WTC11 (cell line): ENCODE measurements at regions of chr7 and their contacts with region 1.

Region 1: GRCh38 chr7:71925663-71926062 is 486.5 kb downstream of the CALN1 start:
- DNase-seq: peak; percentile 51
- ATAC-seq: peak; percentile 100
- H3K4me3 Mint-ChIP-seq: no peak overlapping the region
- H3K27ac Mint-ChIP-seq: no peak overlapping the region
- H3K4me1 Mint-ChIP-seq: no peaks in the 10 kb centered on the region
- H3K27me3 Mint-ChIP-seq: no peaks in the 10 kb centered on the region
- CTCF ChIP-seq: peak; percentile 55

Region 2: DNA sequence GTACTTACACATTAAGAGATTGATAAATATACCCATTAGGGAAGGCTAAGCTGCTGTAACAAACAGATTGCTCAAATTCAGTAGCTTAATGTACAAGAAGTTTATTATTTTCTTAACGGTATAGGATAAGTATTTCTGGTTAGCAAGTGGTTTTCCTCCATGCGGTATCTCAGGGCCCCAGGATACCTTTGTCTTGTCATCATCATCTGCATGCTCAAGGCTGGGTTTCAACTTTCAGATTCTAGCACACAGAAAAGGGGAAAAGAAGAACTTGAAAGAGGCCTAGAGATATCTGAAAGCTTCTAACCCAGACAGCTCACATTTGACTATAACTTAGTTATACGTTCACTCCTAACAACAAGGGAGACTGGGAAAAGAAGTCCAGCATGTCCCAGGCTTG is 805.6 kb before region 1 on chr7:
- CTCF ChIA-PET with region 1: no interaction called
- POLR2A ChIA-PET with region 1: no interaction called
- DNase-seq: no peak
- ATAC-seq: no peak
- H3K4me3 Mint-ChIP-seq: no peak overlapping the region
- H3K27ac Mint-ChIP-seq: no peak overlapping the region
- H3K4me1 Mint-ChIP-seq: peaks cover 5% of the 10 kb centered on the region; the same call in 1 of the 2 replicates
- H3K27me3 Mint-ChIP-seq: peaks cover 7% of the 10 kb centered on the region; the same call in 1 of the 2 replicates
- CTCF ChIP-seq: no peak

Region 3: DNA sequence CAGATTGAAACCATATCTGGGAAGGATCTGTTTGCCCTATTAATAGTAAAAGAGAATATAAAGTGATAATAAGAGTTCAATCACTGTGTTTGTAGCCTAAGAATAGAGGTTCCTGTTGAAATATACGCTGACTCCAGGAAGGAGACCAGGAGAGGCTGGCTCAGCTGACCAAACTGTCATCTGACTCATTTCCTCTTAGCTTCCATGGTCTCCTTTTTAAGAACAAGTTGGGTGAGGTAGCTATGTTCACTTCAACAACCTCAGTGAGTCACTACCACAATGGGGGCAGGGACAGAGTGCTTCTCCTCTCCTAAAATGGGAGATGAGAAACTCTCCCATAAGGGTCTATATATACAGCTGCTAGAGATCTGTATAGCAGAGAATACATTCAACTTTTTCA is 56.9 kb before region 1 on chr7:
- CTCF ChIA-PET with region 1: no interaction called
- POLR2A ChIA-PET with region 1: no interaction called
- DNase-seq: no peak
- ATAC-seq: no peak
- H3K4me3 Mint-ChIP-seq: no peak overlapping the region
- H3K27ac Mint-ChIP-seq: no peak overlapping the region
- H3K4me1 Mint-ChIP-seq: no peaks in the 10 kb centered on the region
- H3K27me3 Mint-ChIP-seq: no peaks in the 10 kb centered on the region
- CTCF ChIP-seq: no peak

Region 4: DNA sequence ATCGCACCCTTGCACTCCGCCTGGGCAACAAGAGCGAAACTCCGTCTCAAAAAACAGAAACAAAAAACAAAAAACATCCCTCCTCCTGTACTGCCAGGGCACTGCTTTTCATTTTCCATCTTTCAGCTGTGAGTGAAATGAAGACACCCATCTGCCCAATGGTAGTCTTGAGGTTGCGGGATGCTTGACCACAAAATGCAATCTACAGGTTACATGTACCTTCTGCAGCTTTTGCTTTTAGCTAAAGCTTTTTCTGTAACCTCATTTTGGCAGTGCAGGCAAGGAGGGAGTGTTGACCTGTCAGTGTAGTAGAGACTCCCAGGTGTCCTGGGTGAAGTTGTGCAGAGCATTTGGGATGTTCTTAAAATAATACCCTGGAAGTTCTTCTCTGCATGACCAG is 10.0 kb after region 1 on chr7:
- CTCF ChIA-PET with region 1: interaction called, 12 read pairs
- POLR2A ChIA-PET with region 1: no interaction called
- DNase-seq: no peak
- ATAC-seq: no peak
- H3K4me3 Mint-ChIP-seq: no peak overlapping the region
- H3K27ac Mint-ChIP-seq: no peak overlapping the region
- H3K4me1 Mint-ChIP-seq: no peaks in the 10 kb centered on the region
- H3K27me3 Mint-ChIP-seq: no peaks in the 10 kb centered on the region
- CTCF ChIP-seq: no peak

Region 5: GRCh38 chr7:72007018-72007417 is 81.4 kb after region 1 on chr7:
- CTCF ChIA-PET with region 1: no interaction called
- POLR2A ChIA-PET with region 1: no interaction called
- DNase-seq: no peak
- ATAC-seq: no peak
- H3K4me3 Mint-ChIP-seq: no peak overlapping the region
- H3K27ac Mint-ChIP-seq: no peak overlapping the region
- H3K4me1 Mint-ChIP-seq: no peaks in the 10 kb centered on the region
- H3K27me3 Mint-ChIP-seq: no peaks in the 10 kb centered on the region
- CTCF ChIP-seq: no peak

Region 6: DNA sequence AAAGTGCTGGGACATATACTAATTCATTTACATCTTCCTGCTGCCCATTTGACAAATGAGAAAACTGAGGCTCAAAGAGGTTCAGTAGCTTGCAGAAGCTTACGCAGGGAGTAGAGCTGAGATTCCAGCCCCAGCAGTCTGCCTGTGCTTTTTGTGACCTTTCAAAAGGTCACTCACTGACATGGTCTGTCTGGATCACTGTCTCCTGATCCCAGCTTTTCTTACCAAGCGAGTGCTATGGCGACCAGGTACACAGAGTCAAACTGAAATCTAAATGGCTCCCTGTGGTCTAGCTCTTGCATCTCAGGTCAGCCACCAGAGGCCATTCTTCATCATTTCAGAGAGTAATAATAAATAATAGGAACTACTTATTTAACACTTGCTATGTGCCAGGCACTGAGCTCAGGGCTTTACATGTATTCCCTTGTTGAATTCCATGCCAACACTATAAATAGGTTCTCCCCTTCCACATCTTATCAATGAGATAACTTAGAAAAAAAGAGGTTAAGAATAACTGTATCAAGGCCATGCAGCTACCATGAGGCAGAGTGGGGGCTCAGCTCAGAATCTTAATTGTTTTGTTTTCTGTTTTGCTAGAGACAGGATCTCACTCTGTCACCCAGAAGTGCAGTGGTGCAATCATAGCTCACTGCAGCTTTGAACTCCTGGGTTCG is 105.5 kb after region 1 on chr7:
- CTCF ChIA-PET with region 1: interaction called, 10 read pairs
- POLR2A ChIA-PET with region 1: no interaction called
- DNase-seq: no peak
- ATAC-seq: no peak
- H3K4me3 Mint-ChIP-seq: no peak overlapping the region
- H3K27ac Mint-ChIP-seq: no peak overlapping the region
- H3K4me1 Mint-ChIP-seq: peaks cover 11% of the 10 kb centered on the region
- H3K27me3 Mint-ChIP-seq: no peaks in the 10 kb centered on the region
- CTCF ChIP-seq: no peak

Region 7: DNA sequence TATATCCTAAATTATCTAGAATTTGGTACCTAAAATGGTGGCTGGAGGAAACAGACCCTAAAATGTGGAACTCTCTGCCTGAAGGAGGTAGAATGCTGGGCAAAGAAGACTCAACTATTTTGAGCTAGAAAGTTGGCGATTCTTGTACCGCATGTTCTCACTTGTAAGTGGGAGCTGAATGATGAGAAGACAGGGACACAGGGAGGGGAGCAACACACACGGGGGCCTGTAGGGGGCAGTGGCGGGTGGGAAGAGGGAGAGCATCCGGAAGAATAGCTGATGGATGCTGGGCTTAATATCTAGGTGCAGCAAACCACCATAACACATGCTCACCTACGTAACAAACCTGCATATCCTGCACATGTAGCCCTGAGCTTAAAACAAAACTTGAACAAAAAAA is 235.9 kb after region 1 on chr7:
- CTCF ChIA-PET with region 1: interaction called, 15 read pairs
- POLR2A ChIA-PET with region 1: no interaction called
- DNase-seq: peak; percentile 74
- ATAC-seq: peak; percentile 59
- H3K4me3 Mint-ChIP-seq: no peak overlapping the region
- H3K27ac Mint-ChIP-seq: no peak overlapping the region
- H3K4me1 Mint-ChIP-seq: no peaks in the 10 kb centered on the region
- H3K27me3 Mint-ChIP-seq: no peaks in the 10 kb centered on the region
- CTCF ChIP-seq: peak; percentile 66

Region 8: DNA sequence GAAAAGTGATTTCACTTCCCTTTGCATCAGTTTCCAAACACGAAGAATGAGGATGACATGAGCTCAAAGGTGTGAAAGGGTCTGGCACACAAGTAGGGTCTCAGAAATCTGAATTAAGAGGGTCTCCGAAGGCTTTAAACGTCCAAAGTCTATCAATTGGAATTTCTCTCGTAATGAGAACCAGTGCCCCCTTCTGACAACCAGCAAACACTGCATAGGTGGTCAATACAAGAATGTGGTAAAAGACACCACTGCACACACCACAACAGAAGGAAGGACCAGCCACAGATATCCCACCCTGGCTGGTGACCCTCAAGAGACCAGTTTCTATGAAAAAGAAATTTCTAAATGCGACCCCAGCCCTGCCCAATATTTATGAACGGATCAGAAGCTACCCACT is 408.4 kb after region 1 on chr7:
- CTCF ChIA-PET with region 1: interaction called, 33 read pairs
- POLR2A ChIA-PET with region 1: interaction called, 3 read pairs
- DNase-seq: no peak
- ATAC-seq: 0 out of 2 replicates have a peak, but pooled peaks have one; percentile 3
- H3K4me3 Mint-ChIP-seq: peak overlapping the region; percentile 48; the same call in 1 of the 2 replicates
- H3K27ac Mint-ChIP-seq: no peak overlapping the region
- H3K4me1 Mint-ChIP-seq: peaks cover 23% of the 10 kb centered on the region
- H3K27me3 Mint-ChIP-seq: peaks cover 21% of the 10 kb centered on the region
- CTCF ChIP-seq: peak; percentile 48

Region 9: GRCh38 chr7:72493850-72494661 is 568.4 kb after region 1 on chr7:
- CTCF ChIA-PET with region 1: interaction called, 14 read pairs
- POLR2A ChIA-PET with region 1: no interaction called
- DNase-seq: peak; percentile 83
- ATAC-seq: peak; percentile 68; the same call in 1 of the 2 replicates
- H3K4me3 Mint-ChIP-seq: no peak overlapping the region
- H3K27ac Mint-ChIP-seq: no peak overlapping the region
- H3K4me1 Mint-ChIP-seq: no peaks in the 10 kb centered on the region
- H3K27me3 Mint-ChIP-seq: no peaks in the 10 kb centered on the region; the same call in 1 of the 2 replicates
- CTCF ChIP-seq: peak; percentile 82